ENCODE measurements at regions of chr2 and their contacts with region 1.

Region 1: DNA sequence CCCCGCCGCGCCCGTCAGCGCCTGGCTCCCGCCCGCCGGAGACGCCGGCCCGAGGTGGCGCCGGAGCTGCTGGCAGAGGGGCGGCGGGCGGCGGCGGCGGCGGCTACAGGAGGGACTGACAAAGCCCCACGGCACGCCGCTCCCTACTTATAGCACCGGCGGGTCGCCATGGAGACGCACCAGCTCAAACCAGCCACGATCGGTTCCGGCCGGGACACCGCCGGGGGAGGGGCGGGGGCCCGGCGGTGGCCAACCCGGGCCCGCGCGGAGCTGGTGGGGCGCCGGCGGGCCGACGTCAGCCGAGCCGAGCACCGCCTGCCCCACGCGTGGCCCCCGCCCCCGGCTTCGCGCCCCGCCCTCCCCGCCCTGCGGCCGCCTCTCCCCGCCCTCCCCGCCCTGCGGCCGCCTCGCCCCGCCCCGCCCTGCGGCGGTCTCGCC is at the start of gene ODC1:
- DNase-seq: peak; percentile 94
- H3K4me3 ChIP-seq: peak within 1 kb of the TSS; percentile 88
- H3K27ac ChIP-seq: peak within 1 kb of the TSS; percentile 85
- H3K4me1 ChIP-seq: peaks cover 26% of the 10 kb centered on the region
- CTCF ChIP-seq: no peak
- total RNA-seq, gene ODC1: 273 and 306 TPM in 2 replicates

Region 2: GRCh38 chr2:9843229-9844035 is 604.8 kb before region 1 on chr2 and contains the start of gene TAF1B:
- CTCF ChIA-PET with region 1: no interaction called
- POLR2A ChIA-PET with region 1: no interaction called
- intact Hi-C with region 1: loop called (anchors 10 kb)
- DNase-seq: peak; percentile 93
- H3K4me3 ChIP-seq: peak within 1 kb of the TSS; percentile 82
- H3K27ac ChIP-seq: peak within 1 kb of the TSS; percentile 62
- H3K4me1 ChIP-seq: peaks cover 32% of the 10 kb centered on the region
- CTCF ChIP-seq: peak; percentile 53
- total RNA-seq, gene TAF1B: 25.1 and 31.1 TPM in 2 replicates

Region 3: GRCh38 chr2:10122386-10123280 is 325.6 kb before region 1 on chr2 and contains the start of gene RRM2:
- CTCF ChIA-PET with region 1: no interaction called
- POLR2A ChIA-PET with region 1: interaction called, 4 read pairs
- intact Hi-C with region 1: loop called (anchors 2 kb)
- DNase-seq: peak; percentile 97
- H3K4me3 ChIP-seq: peak within 1 kb of the TSS; percentile 81
- H3K27ac ChIP-seq: peak within 1 kb of the TSS; percentile 91
- H3K4me1 ChIP-seq: peaks cover 54% of the 10 kb centered on the region
- CTCF ChIP-seq: no peak
- total RNA-seq, gene RRM2: 181 and 222 TPM in 2 replicates

Region 4: DNA sequence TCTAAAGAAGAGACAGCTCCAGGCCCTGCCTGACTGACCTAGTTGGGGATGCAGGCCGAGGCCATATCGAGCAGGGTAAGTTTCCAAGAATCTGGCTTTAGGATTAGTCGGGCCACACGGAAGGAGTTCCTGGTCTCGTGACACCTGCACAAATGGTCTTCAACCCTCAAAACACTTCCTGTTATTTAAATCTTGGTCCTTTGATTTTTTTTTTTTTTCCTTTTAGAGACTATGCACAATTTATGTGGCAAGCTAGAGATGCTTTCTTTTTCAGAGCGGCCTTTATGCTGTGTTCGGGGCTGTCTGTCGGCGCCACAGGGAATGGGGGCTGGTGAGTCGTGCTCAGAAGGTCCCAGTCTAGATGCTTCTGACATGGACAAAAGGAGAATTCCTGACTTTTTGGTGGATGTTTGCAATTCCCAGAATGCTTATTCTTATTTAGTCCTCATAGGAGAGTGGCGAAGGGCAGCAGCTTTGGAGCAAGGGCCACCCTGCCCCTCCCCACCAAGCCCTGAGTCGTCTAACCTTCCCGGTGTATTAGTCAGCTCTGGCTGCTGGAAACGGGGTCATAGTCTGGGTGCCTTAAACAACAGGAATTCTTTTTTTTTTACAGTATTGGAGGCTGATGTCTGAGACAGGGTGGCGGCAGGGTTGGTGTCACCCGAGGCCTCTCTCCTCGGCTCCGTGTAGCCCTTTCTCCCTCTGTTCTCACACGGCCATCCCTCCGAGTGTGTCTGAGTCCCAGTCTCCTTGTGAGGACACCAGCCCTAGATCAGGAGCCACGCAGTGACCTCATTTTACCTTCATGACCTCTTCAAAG is 118.1 kb before region 1 on chr2:
- CTCF ChIA-PET with region 1: no interaction called
- POLR2A ChIA-PET with region 1: no interaction called
- intact Hi-C with region 1: no loop called
- DNase-seq: peak; percentile 66
- H3K4me3 ChIP-seq: peak overlapping the region; percentile 62
- H3K27ac ChIP-seq: peak overlapping the region; percentile 53
- H3K4me1 ChIP-seq: peaks cover 84% of the 10 kb centered on the region
- CTCF ChIP-seq: no peak

Region 5: DNA sequence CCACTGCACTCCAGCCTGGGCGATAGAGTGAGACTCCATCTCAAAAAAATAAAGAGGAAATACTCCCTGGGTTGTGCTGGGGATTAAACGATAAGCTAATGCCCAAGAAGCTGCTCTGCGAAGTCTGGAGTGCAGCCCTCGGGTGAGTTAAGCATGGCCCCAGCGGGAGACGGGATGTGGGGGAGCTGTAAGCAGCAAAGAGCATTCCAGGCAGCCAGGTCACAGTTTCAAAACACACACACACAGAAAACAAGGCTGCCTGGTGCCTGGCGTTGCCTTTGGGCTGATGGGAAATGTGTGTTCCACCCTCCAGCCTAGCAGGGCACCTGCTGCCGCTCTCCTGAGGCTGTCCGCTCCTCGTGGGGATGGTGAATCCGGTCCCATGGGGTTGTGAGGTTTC is 24.2 kb before region 1 on chr2:
- CTCF ChIA-PET with region 1: no interaction called
- POLR2A ChIA-PET with region 1: no interaction called
- intact Hi-C with region 1: no loop called
- DNase-seq: no peak
- H3K4me3 ChIP-seq: no peak overlapping the region
- H3K27ac ChIP-seq: no peak overlapping the region
- H3K4me1 ChIP-seq: no peaks in the 10 kb centered on the region
- CTCF ChIP-seq: no peak

Region 6: GRCh38 chr2:10668402-10669012 is 220.3 kb after region 1 on chr2:
- CTCF ChIA-PET with region 1: no interaction called
- POLR2A ChIA-PET with region 1: no interaction called
- intact Hi-C with region 1: loop called (anchors 5 kb)
- DNase-seq: peak; percentile 75
- H3K4me3 ChIP-seq: no peak overlapping the region
- H3K27ac ChIP-seq: no peak overlapping the region
- H3K4me1 ChIP-seq: no peaks in the 10 kb centered on the region
- CTCF ChIP-seq: peak; percentile 92

Region 7: GRCh38 chr2:11121099-11121822 is 673.0 kb after region 1 on chr2:
- CTCF ChIA-PET with region 1: no interaction called
- POLR2A ChIA-PET with region 1: no interaction called
- intact Hi-C with region 1: no loop called
- DNase-seq: no peak
- H3K4me3 ChIP-seq: no peak overlapping the region
- H3K27ac ChIP-seq: no peak overlapping the region
- H3K4me1 ChIP-seq: no peaks in the 10 kb centered on the region
- CTCF ChIP-seq: no peak

Region 8: DNA sequence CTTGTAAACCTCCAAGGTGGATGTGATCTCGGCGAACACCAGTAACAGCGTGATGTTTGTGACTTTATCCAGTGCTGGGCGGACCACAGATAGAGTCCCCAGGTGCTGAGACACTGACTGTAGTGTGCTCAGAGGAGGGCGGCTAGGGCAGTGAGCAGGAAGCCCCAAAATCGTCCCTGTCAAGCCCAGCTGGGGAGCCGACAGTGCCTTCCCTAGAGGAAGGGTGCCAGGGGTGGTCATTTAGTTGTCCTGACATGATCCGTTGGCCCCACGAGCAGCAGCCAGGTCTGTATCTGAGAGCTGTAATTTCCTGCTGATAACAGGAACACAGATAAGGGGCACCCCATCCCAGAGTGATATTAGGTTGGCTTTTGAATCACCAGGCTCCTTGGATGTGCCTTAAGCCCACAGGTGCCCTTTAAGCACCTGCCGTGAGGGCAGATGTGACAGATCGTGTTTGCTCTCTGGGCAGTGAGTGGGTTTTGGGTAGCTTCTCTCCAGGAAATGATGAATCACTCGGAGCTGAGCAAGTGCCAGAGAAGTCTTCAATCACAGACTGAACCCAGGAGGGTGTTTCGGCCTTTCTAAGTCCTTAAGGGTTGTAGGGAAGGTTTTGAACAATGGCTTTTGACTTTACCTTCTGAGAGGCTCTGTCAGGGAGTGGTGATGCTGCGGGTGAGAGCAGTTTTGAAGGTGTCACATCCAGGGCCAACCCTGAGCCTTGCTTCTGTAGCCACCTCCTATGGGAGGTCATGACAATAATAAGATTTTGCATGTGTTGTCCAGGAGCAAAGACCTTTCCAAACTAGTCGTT is 1305.9 kb after region 1 on chr2:
- CTCF ChIA-PET with region 1: no interaction called
- POLR2A ChIA-PET with region 1: no interaction called
- intact Hi-C with region 1: loop called (anchors 5 kb)
- DNase-seq: peak; percentile 63
- H3K4me3 ChIP-seq: peak overlapping the region; percentile 62
- H3K27ac ChIP-seq: peak overlapping the region; percentile 95
- H3K4me1 ChIP-seq: peaks cover 87% of the 10 kb centered on the region
- CTCF ChIP-seq: no peak